ENCODE measurements at regions of chr1 and their contacts with region 1.

Region 1: GRCh38 chr1:237386362-237387143 is 344.6 kb downstream of the RYR2 start:
- DNase-seq: no peak
- H3K4me3 ChIP-seq: no peak overlapping the region
- H3K4me3 Mint-ChIP-seq: no peak overlapping the region
- H3K27ac Mint-ChIP-seq: no peak overlapping the region
- H3K4me1 ChIP-seq: no peaks in the 10 kb centered on the region
- H3K4me1 Mint-ChIP-seq: no peaks in the 10 kb centered on the region
- H3K27me3 ChIP-seq: no peaks in the 10 kb centered on the region
- H3K27me3 Mint-ChIP-seq: peaks cover 3% of the 10 kb centered on the region
- CTCF ChIP-seq: peak; percentile 47 to 51

Region 2: DNA sequence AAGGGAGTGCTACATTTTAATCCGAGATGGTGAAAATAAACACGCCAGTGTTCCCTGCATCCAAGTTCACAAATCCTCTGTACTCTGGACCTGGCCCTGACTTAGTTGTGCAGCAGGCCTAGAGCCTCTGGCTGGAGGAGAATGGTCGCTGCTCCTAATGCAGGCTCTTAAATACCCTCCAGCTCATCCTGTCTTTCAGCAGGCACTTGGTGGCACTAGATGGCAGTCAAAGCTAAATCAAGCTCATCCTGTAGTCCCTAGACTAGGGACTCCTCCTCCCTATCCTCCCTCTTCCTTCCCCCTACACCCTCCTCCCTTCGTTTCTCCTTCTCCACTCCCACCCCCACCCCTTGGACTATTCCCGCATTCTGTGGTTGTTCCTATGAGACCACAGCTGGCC is 633.0 kb before region 1 on chr1:
- CTCF ChIA-PET with region 1: interaction called, 9 read pairs
- POLR2A ChIA-PET with region 1: no interaction called
- intact Hi-C with region 1: loop called (anchors 1 kb)
- DNase-seq: peak; percentile 50 to 53
- H3K4me3 ChIP-seq: no peak overlapping the region
- H3K4me3 Mint-ChIP-seq: no peak overlapping the region
- H3K27ac Mint-ChIP-seq: no peak overlapping the region
- H3K4me1 ChIP-seq: no peaks in the 10 kb centered on the region
- H3K4me1 Mint-ChIP-seq: no peaks in the 10 kb centered on the region
- H3K27me3 ChIP-seq: no peaks in the 10 kb centered on the region
- H3K27me3 Mint-ChIP-seq: peaks cover 5% of the 10 kb centered on the region
- CTCF ChIP-seq: peak; percentile 24 to 32

Region 3: GRCh38 chr1:236759252-236759859 is 627.2 kb before region 1 on chr1:
- CTCF ChIA-PET with region 1: no interaction called
- POLR2A ChIA-PET with region 1: no interaction called
- intact Hi-C with region 1: loop called (anchors 1 kb)
- DNase-seq: peak in 1 of 2 experiments; percentile 39
- H3K4me3 ChIP-seq: no peak overlapping the region
- H3K4me3 Mint-ChIP-seq: no peak overlapping the region
- H3K27ac Mint-ChIP-seq: no peak overlapping the region
- H3K4me1 ChIP-seq: 0 out of 2 replicates have a peak, but pooled peaks cover 4% of the 10 kb centered on the region
- H3K4me1 Mint-ChIP-seq: no peaks in the 10 kb centered on the region
- H3K27me3 ChIP-seq: no peaks in the 10 kb centered on the region
- H3K27me3 Mint-ChIP-seq: peaks cover 3% of the 10 kb centered on the region
- CTCF ChIP-seq: peak; percentile 53 to 54

Region 4: DNA sequence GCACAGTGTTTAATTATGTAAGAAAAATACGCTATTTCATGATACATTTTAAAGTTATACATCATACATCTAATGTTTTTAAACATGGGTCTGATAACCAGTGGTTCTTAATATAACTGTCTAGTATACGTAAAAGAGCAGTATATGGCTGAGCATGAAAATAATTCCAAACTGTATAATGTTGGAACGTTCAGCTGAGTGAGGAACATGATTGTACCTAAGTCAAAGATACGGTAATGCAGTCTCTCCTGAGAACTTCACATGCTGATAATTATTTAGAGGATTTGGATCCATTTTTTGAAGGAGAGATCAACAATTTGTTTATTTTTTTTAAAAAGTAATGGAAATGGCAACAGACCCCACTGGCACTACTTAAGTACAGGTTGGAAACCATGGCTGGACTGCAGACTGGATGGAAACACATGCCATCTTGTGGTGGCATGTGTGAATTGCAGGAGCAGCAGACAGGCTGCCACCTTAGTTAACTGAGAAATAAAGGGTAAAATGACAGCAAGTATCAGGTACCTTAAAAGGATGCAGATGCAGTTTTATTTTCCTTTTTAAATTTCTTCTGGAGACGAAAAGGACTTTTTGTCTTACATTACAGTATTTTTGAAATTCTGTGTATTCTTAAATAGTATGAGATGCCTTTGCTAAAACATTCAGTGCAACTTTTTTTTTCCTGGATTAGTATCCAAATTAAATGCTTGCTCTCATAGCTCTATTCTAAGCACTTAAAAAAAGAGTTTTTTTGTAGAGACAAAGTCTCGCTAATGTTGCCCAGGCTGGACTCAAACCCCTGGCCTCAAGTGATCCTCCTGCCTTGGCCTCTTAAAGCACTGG is 517.7 kb before region 1 on chr1:
- CTCF ChIA-PET with region 1: no interaction called
- POLR2A ChIA-PET with region 1: no interaction called
- intact Hi-C with region 1: loop called (anchors 5 kb)
- DNase-seq: peak in 1 of 2 experiments; percentile 58
- H3K4me3 ChIP-seq: no peak overlapping the region
- H3K4me3 Mint-ChIP-seq: no peak overlapping the region
- H3K27ac Mint-ChIP-seq: no peak overlapping the region
- H3K4me1 ChIP-seq: no peaks in the 10 kb centered on the region
- H3K4me1 Mint-ChIP-seq: no peaks in the 10 kb centered on the region
- H3K27me3 ChIP-seq: no peaks in the 10 kb centered on the region
- H3K27me3 Mint-ChIP-seq: no peaks in the 10 kb centered on the region
- CTCF ChIP-seq: peak; percentile 84 to 95

Region 5: GRCh38 chr1:237146241-237146640 is 240.3 kb before region 1 on chr1:
- CTCF ChIA-PET with region 1: no interaction called
- POLR2A ChIA-PET with region 1: no interaction called
- intact Hi-C with region 1: loop called (anchors 10 kb)
- DNase-seq: no peak
- H3K4me3 ChIP-seq: no peak overlapping the region
- H3K4me3 Mint-ChIP-seq: no peak overlapping the region
- H3K27ac Mint-ChIP-seq: no peak overlapping the region
- H3K4me1 ChIP-seq: no peaks in the 10 kb centered on the region
- H3K4me1 Mint-ChIP-seq: no peaks in the 10 kb centered on the region
- H3K27me3 ChIP-seq: no peaks in the 10 kb centered on the region
- H3K27me3 Mint-ChIP-seq: peaks cover 17% of the 10 kb centered on the region
- CTCF ChIP-seq: no peak

Region 6: GRCh38 chr1:237562242-237562823 is 175.8 kb after region 1 on chr1:
- CTCF ChIA-PET with region 1: no interaction called
- POLR2A ChIA-PET with region 1: no interaction called
- intact Hi-C with region 1: loop called (anchors 1 kb)
- DNase-seq: peak in 1 of 2 experiments; percentile 55
- H3K4me3 ChIP-seq: no peak overlapping the region
- H3K4me3 Mint-ChIP-seq: no peak overlapping the region
- H3K27ac Mint-ChIP-seq: no peak overlapping the region
- H3K4me1 ChIP-seq: no peaks in the 10 kb centered on the region
- H3K4me1 Mint-ChIP-seq: peaks cover 6% of the 10 kb centered on the region
- H3K27me3 ChIP-seq: no peaks in the 10 kb centered on the region
- H3K27me3 Mint-ChIP-seq: peaks cover 9% of the 10 kb centered on the region
- CTCF ChIP-seq: peak; percentile 46 to 48

Measured in Caco-2 (cell line).